ENCODE measurements at regions of chr7 and their contacts with region 1.

Region 1: DNA sequence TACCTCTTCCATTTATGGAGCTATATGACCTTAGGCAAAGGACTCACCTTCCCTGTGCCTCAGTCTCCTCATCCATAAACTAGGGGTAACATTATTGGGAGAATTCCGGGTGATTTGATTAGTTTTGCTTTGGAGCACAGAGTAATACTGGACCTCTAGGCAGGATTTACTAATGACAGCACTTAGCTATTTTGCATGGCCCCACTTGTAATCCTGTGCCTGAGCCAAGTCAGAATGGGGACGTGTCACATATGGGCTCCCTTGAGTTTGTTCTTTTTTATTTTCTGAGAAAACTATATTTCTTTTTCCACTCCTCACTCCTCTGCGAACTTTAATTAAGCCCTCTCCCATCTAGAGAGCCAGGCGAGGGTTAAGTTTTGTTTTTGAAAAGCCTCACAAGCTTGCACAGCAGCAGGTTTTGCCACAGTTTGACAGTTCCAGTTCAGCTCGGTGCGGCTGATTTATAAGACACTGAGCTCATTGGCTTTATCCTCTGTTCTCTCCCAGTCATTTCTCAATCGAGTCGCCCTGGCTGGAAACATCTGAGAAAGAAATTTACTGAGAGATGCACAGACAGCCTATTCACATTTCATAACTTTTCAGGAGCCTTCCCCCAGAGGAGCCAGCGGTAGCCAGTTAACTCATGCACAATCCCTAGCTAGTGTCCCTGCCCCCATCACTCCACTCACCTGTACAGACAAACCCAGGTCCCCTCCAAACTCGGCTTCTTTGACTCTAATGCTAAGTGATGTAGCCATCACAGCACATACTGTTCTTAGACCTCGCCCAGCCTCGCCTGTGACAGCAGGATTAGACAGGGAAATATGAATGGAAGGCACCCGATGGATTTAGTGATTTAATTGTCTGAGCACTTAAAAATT is 441.9 kb upstream of the NPVF start:
- DNase-seq: peak; percentile 35 to 70
- ATAC-seq: peak; percentile 53 to 95 (median 85)
- H3K4me3 ChIP-seq: peak overlapping the region; percentile 29
- H3K27ac ChIP-seq: peak overlapping the region; percentile 50
- H3K4me1 ChIP-seq: peaks cover 19% of the 10 kb centered on the region
- H3K27me3 ChIP-seq: no peaks in the 10 kb centered on the region
- CTCF ChIP-seq: no peak

Region 2: GRCh38 chr7:25653384-25653783 is 16.8 kb before region 1 on chr7:
- intact Hi-C with region 1: no loop called
- DNase-seq: no peak
- ATAC-seq: no peak
- H3K4me3 ChIP-seq: no peak overlapping the region
- H3K27ac ChIP-seq: no peak overlapping the region
- H3K4me1 ChIP-seq: no peaks in the 10 kb centered on the region
- H3K27me3 ChIP-seq: no peaks in the 10 kb centered on the region
- CTCF ChIP-seq: no peak

Region 3: DNA sequence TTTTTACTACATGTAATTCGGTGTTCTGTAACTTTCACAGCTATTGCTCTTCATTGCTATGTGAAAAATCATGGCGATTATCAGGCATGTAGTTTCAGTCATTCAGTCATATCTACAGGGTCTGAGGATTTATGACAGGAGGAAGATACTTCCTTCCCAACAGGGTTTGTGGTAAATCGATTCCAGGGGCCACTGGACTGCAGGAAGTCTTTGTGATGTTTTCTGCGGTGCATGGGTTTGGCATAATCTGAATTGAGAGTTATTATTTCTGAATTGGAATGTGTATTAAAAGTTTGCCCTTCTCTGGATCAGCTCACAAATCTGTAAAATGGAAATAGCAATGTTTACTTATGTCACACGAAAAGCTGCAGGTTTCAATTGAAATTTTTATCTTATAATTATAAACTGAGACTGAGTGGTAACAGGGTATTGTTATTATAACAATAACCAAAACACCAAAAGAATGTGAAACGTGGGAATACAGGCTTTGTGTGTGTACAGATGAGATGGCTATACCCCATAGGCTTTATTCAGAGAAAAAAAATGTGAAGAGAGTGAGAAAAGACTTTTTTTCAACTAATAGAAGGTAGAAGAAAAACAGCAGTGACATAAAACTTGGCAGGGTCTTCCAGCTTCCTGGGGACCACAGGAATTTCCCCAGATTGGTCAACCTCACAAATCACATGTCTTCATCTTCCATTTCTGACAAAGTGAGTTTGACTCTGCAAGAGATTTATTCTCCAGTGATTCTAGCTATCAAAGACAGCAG is 174.1 kb after region 1 on chr7:
- intact Hi-C with region 1: loop called in 1 of 2 experiments (anchors 5 kb)
- DNase-seq: no peak
- ATAC-seq: no peak
- H3K4me3 ChIP-seq: no peak overlapping the region
- H3K27ac ChIP-seq: peak overlapping the region; percentile 85
- H3K4me1 ChIP-seq: peaks cover 88% of the 10 kb centered on the region
- H3K27me3 ChIP-seq: no peaks in the 10 kb centered on the region
- CTCF ChIP-seq: no peak

Measured in psoas muscle (tissue), 8 donors.